ENCODE measurements at regions of chr16 and their contacts with region 1.

Region 1: GRCh38 chr16:57863434-57864160 is 61.3 kb upstream of the KIFC3 start:
- DNase-seq: peak; percentile 79
- ATAC-seq: peak; percentile 93
- H3K4me3 ChIP-seq: no peak overlapping the region
- H3K27ac ChIP-seq: no peak overlapping the region
- H3K4me1 ChIP-seq: peaks cover 4% of the 10 kb centered on the region
- H3K27me3 ChIP-seq: no peaks in the 10 kb centered on the region
- CTCF ChIP-seq: peak; percentile 78
- POLR2A ChIP-seq: no peak
- RAD21 ChIP-seq: peak; percentile 77

Region 2: GRCh38 chr16:57591086-57591869 is 272.3 kb before region 1 on chr16:
- CTCF ChIA-PET with region 1: interaction called, 3 read pairs
- POLR2A ChIA-PET with region 1: no interaction called
- dilution Hi-C with region 1: no loop called
- in situ Hi-C with region 1: loop called (anchors 10 kb)
- intact Hi-C with region 1: loop called (anchors 10 kb)
- DNase-seq: peak; percentile 82
- ATAC-seq: peak; percentile 93
- H3K4me3 ChIP-seq: no peak overlapping the region
- H3K27ac ChIP-seq: peak overlapping the region; percentile 2; the same call in 1 of the 2 replicates
- H3K4me1 ChIP-seq: peaks cover 8% of the 10 kb centered on the region
- H3K27me3 ChIP-seq: 0 out of 2 replicates have a peak, but pooled peaks cover 3% of the 10 kb centered on the region
- CTCF ChIP-seq: peak; percentile 93
- POLR2A ChIP-seq: no peak
- RAD21 ChIP-seq: peak; percentile 83

Region 3: DNA sequence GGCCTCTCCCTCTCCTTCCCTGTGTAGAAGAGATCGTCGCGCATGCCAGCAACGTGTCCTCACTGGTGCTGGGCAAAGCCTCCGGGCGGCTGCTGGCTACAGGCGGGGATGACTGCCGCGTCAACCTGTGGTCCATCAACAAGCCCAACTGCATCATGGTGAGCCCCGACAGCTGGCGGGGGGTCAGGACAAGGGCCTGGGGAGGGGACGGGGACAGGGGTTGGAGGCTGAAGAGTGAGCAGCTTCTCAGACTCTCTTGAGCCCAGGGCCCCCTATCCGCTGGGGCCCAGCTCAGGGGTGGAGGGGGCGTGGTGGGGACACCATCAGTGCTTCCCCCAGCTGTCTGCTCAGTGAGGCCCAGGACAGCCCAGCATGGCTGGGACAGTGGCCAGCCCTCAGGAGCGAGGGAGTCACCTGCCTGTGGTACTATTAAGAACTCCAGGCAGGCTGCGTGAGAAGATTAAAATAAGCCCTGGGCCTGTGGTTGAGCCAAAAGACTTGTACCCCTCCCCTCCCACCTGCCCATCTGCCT is 121.9 kb before region 1 on chr16:
- CTCF ChIA-PET with region 1: no interaction called
- POLR2A ChIA-PET with region 1: no interaction called
- dilution Hi-C with region 1: no loop called
- in situ Hi-C with region 1: no loop called
- intact Hi-C with region 1: no loop called
- DNase-seq: no peak
- ATAC-seq: no peak
- H3K4me3 ChIP-seq: no peak overlapping the region
- H3K27ac ChIP-seq: no peak overlapping the region
- H3K4me1 ChIP-seq: peaks cover 8% of the 10 kb centered on the region
- H3K27me3 ChIP-seq: no peaks in the 10 kb centered on the region
- CTCF ChIP-seq: no peak
- POLR2A ChIP-seq: no peak
- RAD21 ChIP-seq: no peak

Region 4: GRCh38 chr16:57757326-57757786 is 106.2 kb before region 1 on chr16:
- CTCF ChIA-PET with region 1: interaction called, 12 read pairs
- POLR2A ChIA-PET with region 1: no interaction called
- dilution Hi-C with region 1: no loop called
- in situ Hi-C with region 1: loop called (anchors 10 kb)
- intact Hi-C with region 1: loop called (anchors 1 kb)
- DNase-seq: peak; percentile 69
- ATAC-seq: peak; percentile 99
- H3K4me3 ChIP-seq: no peak overlapping the region
- H3K27ac ChIP-seq: no peak overlapping the region
- H3K4me1 ChIP-seq: 0 out of 2 replicates have a peak, but pooled peaks cover 2% of the 10 kb centered on the region
- H3K27me3 ChIP-seq: no peaks in the 10 kb centered on the region
- CTCF ChIP-seq: peak; percentile 97
- POLR2A ChIP-seq: no peak; the same call in 1 of the 2 replicates
- RAD21 ChIP-seq: peak; percentile 95

Region 5: GRCh38 chr16:57802341-57803133 is 61.1 kb before region 1 on chr16 and contains the start of gene KIFC3:
- CTCF ChIA-PET with region 1: interaction called, 7 read pairs
- POLR2A ChIA-PET with region 1: no interaction called
- dilution Hi-C with region 1: no loop called
- in situ Hi-C with region 1: no loop called
- intact Hi-C with region 1: loop called (anchors 1 kb)
- DNase-seq: peak; percentile 72
- ATAC-seq: peak; percentile 75
- H3K4me3 ChIP-seq: peak within 1 kb of the TSS; percentile 84
- H3K27ac ChIP-seq: peak within 1 kb of the TSS; percentile 93
- H3K4me1 ChIP-seq: peaks cover 33% of the 10 kb centered on the region
- H3K27me3 ChIP-seq: no peaks in the 10 kb centered on the region
- CTCF ChIP-seq: peak; percentile 41
- POLR2A ChIP-seq: peak; percentile 68
- RAD21 ChIP-seq: peak; percentile 32; the same call in 1 of the 2 replicates
- total RNA-seq, gene KIFC3: 38.3 and 48.6 TPM in 2 replicates

Measured in IMR-90 (cell line).